ENCODE measurements at regions of chr2 and their contacts with region 1.

Region 1: GRCh38 chr2:46306330-46306751 is 9.1 kb downstream of the EPAS1 start:
- DNase-seq: peak in 1 of 2 experiments; percentile 42
- H3K4me3 ChIP-seq: no peak overlapping the region
- H3K4me3 Mint-ChIP-seq: no peak overlapping the region
- H3K27ac Mint-ChIP-seq: peak overlapping the region; percentile 49
- H3K4me1 ChIP-seq: peaks cover 72% of the 10 kb centered on the region
- H3K4me1 Mint-ChIP-seq: peaks cover 75% of the 10 kb centered on the region
- H3K27me3 ChIP-seq: no peaks in the 10 kb centered on the region
- H3K27me3 Mint-ChIP-seq: no peaks in the 10 kb centered on the region
- CTCF ChIP-seq: no peak

Region 2: DNA sequence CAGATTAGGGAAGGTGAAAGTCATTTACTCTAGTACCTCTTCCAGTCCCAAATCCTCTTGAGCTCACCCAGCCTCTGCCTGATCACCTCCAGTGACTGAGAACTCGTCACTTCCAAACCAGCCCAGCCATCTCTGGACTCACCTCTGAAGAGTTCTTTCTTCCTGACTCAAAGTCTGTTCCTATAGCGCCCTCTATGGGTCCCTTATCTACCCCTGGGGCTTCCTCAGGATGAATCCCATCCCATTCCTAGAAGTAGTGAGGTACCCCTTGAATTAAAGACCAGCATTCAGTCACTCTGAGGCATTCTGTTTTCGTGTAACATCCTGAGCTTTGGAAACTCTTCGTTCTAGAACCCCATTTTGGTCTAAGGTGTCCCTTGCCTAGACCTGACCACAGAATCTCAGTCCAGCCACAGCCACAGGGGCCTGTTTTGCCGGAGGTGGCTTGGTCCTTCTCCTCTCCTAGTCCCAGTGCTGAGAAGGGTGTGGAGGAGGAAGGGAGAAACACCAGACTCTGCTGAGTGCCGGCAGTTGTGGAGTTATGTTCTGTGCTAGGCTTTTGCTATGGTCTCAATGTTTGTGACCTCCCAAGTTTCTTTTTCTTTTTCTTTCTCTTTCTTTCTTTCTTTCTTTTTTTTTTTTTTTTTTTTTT is 1332.2 kb before region 1 on chr2:
- CTCF ChIA-PET with region 1: no interaction called
- POLR2A ChIA-PET with region 1: no interaction called
- intact Hi-C with region 1: no loop called
- DNase-seq: peak; percentile 58 to 60
- H3K4me3 ChIP-seq: no peak overlapping the region
- H3K4me3 Mint-ChIP-seq: no peak overlapping the region
- H3K27ac Mint-ChIP-seq: no peak overlapping the region
- H3K4me1 ChIP-seq: no peaks in the 10 kb centered on the region
- H3K4me1 Mint-ChIP-seq: no peaks in the 10 kb centered on the region
- H3K27me3 ChIP-seq: no peaks in the 10 kb centered on the region
- H3K27me3 Mint-ChIP-seq: peaks cover 2% of the 10 kb centered on the region
- CTCF ChIP-seq: peak; percentile 44 to 48

Region 3: GRCh38 chr2:45993476-45993991 is 312.8 kb before region 1 on chr2:
- CTCF ChIA-PET with region 1: no interaction called
- POLR2A ChIA-PET with region 1: no interaction called
- intact Hi-C with region 1: loop called (anchors 1 kb)
- DNase-seq: peak; percentile 71 to 82
- H3K4me3 ChIP-seq: no peak overlapping the region
- H3K4me3 Mint-ChIP-seq: no peak overlapping the region
- H3K27ac Mint-ChIP-seq: no peak overlapping the region
- H3K4me1 ChIP-seq: no peaks in the 10 kb centered on the region; the same call in 1 of the 2 replicates
- H3K4me1 Mint-ChIP-seq: peaks cover 12% of the 10 kb centered on the region
- H3K27me3 ChIP-seq: no peaks in the 10 kb centered on the region
- H3K27me3 Mint-ChIP-seq: no peaks in the 10 kb centered on the region
- CTCF ChIP-seq: peak; percentile 80 to 83

Region 4: DNA sequence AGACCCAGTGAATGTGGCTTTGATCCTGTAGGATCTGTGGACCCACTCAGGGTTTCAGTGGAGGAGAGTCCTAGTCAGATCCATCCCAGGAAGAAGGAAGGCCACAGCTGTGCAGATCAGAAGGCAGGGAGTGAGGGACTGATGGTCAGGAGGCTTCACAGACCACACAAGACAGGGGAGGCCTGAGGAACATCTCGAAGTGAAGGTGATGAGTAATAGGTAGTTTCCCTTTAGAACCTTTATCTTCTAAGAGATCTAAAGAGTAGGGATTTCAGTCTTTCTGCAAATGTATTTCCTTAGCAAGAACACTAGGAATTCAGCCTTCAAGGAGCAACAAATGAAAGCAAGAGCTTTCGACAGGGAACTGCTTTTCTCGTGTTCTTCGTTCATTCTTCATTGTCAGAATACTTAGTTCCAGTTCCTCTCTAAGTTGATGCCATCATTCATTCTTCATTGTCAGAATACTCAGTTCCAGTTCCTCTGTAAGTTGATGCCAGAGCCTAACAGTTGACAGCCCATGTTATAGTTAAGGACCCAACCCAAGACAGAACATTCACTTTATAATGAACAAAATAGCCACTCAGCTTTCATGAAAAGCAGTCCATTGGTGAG is 159.3 kb before region 1 on chr2:
- CTCF ChIA-PET with region 1: no interaction called
- POLR2A ChIA-PET with region 1: no interaction called
- intact Hi-C with region 1: no loop called
- DNase-seq: no peak
- H3K4me3 ChIP-seq: no peak overlapping the region
- H3K4me3 Mint-ChIP-seq: no peak overlapping the region
- H3K27ac Mint-ChIP-seq: no peak overlapping the region
- H3K4me1 ChIP-seq: peaks cover 13% of the 10 kb centered on the region
- H3K4me1 Mint-ChIP-seq: peaks cover 13% of the 10 kb centered on the region
- H3K27me3 ChIP-seq: no peaks in the 10 kb centered on the region
- H3K27me3 Mint-ChIP-seq: no peaks in the 10 kb centered on the region
- CTCF ChIP-seq: no peak

Region 5: GRCh38 chr2:46268196-46268595 is 38.1 kb before region 1 on chr2:
- CTCF ChIA-PET with region 1: no interaction called
- POLR2A ChIA-PET with region 1: no interaction called
- intact Hi-C with region 1: no loop called
- DNase-seq: no peak
- H3K4me3 ChIP-seq: no peak overlapping the region
- H3K4me3 Mint-ChIP-seq: no peak overlapping the region
- H3K27ac Mint-ChIP-seq: no peak overlapping the region
- H3K4me1 ChIP-seq: no peaks in the 10 kb centered on the region
- H3K4me1 Mint-ChIP-seq: no peaks in the 10 kb centered on the region
- H3K27me3 ChIP-seq: no peaks in the 10 kb centered on the region
- H3K27me3 Mint-ChIP-seq: no peaks in the 10 kb centered on the region
- CTCF ChIP-seq: no peak

Region 6: GRCh38 chr2:46326231-46326980 is 20.1 kb after region 1 on chr2:
- CTCF ChIA-PET with region 1: interaction called, 6 read pairs
- POLR2A ChIA-PET with region 1: no interaction called
- intact Hi-C with region 1: loop called (anchors 1 kb)
- DNase-seq: peak; percentile 81 to 83
- H3K4me3 ChIP-seq: no peak overlapping the region
- H3K4me3 Mint-ChIP-seq: peak overlapping the region; percentile 23
- H3K27ac Mint-ChIP-seq: peak overlapping the region; percentile 89
- H3K4me1 ChIP-seq: peaks cover 47% of the 10 kb centered on the region
- H3K4me1 Mint-ChIP-seq: peaks cover 51% of the 10 kb centered on the region
- H3K27me3 ChIP-seq: no peaks in the 10 kb centered on the region
- H3K27me3 Mint-ChIP-seq: no peaks in the 10 kb centered on the region
- CTCF ChIP-seq: no peak

Region 7: GRCh38 chr2:46335391-46336282 is 29.3 kb after region 1 on chr2:
- CTCF ChIA-PET with region 1: no interaction called
- POLR2A ChIA-PET with region 1: no interaction called
- intact Hi-C with region 1: loop called (anchors 1 kb)
- DNase-seq: peak; percentile 67 to 75
- H3K4me3 ChIP-seq: peak overlapping the region; percentile 34
- H3K4me3 Mint-ChIP-seq: peak overlapping the region; percentile 83
- H3K27ac Mint-ChIP-seq: peak overlapping the region; percentile 77
- H3K4me1 ChIP-seq: peaks cover 52% of the 10 kb centered on the region
- H3K4me1 Mint-ChIP-seq: peaks cover 66% of the 10 kb centered on the region
- H3K27me3 ChIP-seq: no peaks in the 10 kb centered on the region
- H3K27me3 Mint-ChIP-seq: no peaks in the 10 kb centered on the region
- CTCF ChIP-seq: no peak

Region 8: DNA sequence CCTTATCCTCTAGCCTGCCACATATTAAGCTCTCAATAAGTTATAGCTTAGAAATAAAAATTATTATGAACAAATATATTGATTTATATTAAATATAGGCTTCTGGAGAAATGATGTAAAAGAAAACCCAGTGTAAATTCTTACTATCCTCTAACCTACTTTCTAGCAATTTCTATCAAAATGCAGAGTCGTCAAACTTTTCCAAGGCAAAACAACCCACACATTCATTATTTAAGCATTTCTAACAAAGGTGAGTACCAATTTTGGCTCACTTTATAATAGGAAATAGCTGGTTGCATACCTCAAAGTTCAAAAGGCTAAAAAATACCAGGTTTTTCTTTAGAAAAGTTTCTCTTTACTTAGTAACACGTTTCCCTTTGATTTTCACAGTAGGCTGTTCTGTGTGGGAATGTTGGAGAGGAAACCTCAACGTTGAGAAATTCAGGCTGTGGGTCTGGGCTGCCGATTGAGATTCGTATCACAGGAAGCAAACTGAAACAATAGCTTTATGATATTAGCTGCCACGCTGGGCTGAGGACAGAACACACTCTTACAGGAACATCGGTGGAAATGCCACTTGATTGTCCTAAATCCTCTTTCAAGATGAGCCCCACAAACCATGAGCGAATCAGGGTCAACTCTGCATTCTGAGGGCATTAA is 43.8 kb after region 1 on chr2:
- CTCF ChIA-PET with region 1: no interaction called
- POLR2A ChIA-PET with region 1: no interaction called
- intact Hi-C with region 1: no loop called
- DNase-seq: no peak
- H3K4me3 ChIP-seq: no peak overlapping the region
- H3K4me3 Mint-ChIP-seq: no peak overlapping the region
- H3K27ac Mint-ChIP-seq: no peak overlapping the region
- H3K4me1 ChIP-seq: no peaks in the 10 kb centered on the region
- H3K4me1 Mint-ChIP-seq: no peaks in the 10 kb centered on the region
- H3K27me3 ChIP-seq: no peaks in the 10 kb centered on the region
- H3K27me3 Mint-ChIP-seq: no peaks in the 10 kb centered on the region
- CTCF ChIP-seq: no peak

Measured in Caco-2 (cell line).